PC-3 (cell line): ENCODE measurements at regions of chr17 and their contacts with region 1.

Region 1: GRCh38 chr17:72510397-72511016 is 389.7 kb downstream of the SOX9 start:
- DNase-seq: peak; percentile 28
- ATAC-seq: peak; percentile 62
- H3K4me3 ChIP-seq: no peak overlapping the region
- H3K27ac ChIP-seq: no peak overlapping the region
- H3K4me1 ChIP-seq: peaks cover 24% of the 10 kb centered on the region
- H3K27me3 ChIP-seq: no peaks in the 10 kb centered on the region
- CTCF ChIP-seq: no peak

Region 2: DNA sequence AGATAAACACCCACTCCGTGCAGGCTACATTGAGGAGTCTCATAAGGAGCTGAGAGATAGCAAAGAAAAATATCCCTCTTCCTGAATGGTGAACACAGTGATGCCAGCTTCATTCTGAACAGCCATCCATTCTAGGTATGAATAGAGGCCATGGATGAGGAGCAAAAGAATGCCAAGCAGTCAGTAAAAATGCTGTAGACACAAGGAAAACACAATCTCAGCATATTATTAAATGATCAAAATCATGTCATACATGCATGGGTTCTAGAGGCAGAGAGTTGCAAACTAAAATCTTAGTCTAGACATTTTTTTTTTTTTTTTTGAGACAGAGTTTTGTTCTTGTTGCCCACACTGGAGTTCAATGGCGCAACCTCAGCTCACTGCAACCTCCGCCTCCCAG is 76.7 kb before region 1 on chr17:
- CTCF ChIA-PET with region 1: no interaction called
- POLR2A ChIA-PET with region 1: interaction called, 12 read pairs
- intact Hi-C with region 1: no loop called
- DNase-seq: no peak
- ATAC-seq: no peak
- H3K4me3 ChIP-seq: no peak overlapping the region
- H3K27ac ChIP-seq: no peak overlapping the region
- H3K4me1 ChIP-seq: peaks cover 21% of the 10 kb centered on the region; the same call in 1 of the 2 replicates
- H3K27me3 ChIP-seq: no peaks in the 10 kb centered on the region
- CTCF ChIP-seq: no peak